GM18951 (cell line): ENCODE measurements at regions of chr19 and their contacts with region 1.

Region 1: GRCh38 chr19:2950286-2951124 is 5.7 kb upstream of the ZNF77 start:
- POLR2A ChIP-seq: peak; percentile 96

Region 2: GRCh38 chr19:2171349-2172145 is 779.0 kb before region 1 on chr19:
- in situ Hi-C with region 1: no loop called
- POLR2A ChIP-seq: peak; percentile 38

Region 3: GRCh38 chr19:3108775-3109174 is 158.3 kb after region 1 on chr19:
- in situ Hi-C with region 1: loop called (anchors 10 kb)
- POLR2A ChIP-seq: no peak